GM13976 (cell line): ENCODE measurements at regions of chr19 and their contacts with region 1.

Region 1: GRCh38 chr19:14073261-14073924 is 807 bp downstream of the MISP3 start:
- DNase-seq: peak; percentile 86
- CTCF ChIP-seq: peak; percentile 93

Region 2: GRCh38 chr19:13621413-13621812 is 452.0 kb before region 1 on chr19:
- in situ Hi-C with region 1: loop called (anchors 25 kb)
- DNase-seq: no peak
- CTCF ChIP-seq: no peak

Region 3: GRCh38 chr19:13758795-13759194 is 314.6 kb before region 1 on chr19:
- in situ Hi-C with region 1: no loop called
- DNase-seq: no peak
- CTCF ChIP-seq: no peak

Region 4: DNA sequence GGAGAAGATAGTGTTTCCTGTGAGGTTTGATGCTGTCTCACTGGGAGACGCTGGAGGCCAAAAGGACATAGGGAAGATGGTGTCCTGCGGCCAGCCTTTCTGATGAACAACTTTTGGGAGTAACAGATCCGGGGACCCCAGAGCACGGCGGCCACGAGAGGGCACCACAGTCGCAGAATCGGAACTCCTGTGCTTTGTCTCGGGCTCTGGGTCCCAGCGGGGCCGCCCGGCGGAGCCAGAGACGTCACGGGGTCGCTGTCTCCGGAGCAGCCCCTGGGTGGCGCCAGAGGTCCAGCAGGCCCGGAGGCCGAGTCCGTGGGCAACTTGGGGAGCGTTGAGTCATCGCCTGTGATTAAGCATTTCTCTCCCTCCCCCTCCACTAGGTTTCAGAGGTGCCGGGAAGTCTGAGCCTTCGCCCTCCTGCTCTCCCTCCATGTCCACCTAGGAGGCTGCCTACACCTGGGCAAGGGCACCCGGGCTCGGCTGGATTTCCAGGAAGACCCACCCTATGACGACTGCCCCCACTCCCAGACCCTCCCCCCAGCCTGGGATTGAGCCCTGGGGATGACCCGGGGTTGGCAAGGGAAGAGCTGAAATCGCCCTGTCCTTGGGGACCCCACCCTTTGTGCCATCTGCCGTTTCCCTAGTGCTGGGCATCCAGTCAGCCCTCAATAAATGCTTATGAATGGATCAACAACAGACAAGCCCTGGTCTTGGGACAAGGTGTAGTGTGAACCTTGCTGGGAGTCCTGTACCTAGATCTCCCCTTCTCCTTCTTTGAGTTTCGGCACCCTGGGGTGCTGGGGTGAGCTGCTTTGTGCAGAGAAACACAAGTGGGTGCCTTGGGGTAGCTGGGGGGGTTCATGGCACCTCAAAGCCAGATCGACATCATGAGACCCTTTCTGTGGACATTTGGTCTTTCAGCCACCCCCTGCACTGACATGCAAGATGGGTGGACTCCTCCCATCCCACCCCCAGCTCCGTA is 193.0 kb before region 1 on chr19:
- in situ Hi-C with region 1: loop called (anchors 5 kb)
- DNase-seq: peak; percentile 98
- CTCF ChIP-seq: peak; percentile 89